Heart left ventricle (tissue), 16 donors: ENCODE measurements at regions of chr7 and their contacts with region 1.

Region 1: GRCh38 chr7:133587903-133588302 is 335.0 kb downstream of the EXOC4 start:
- DNase-seq: no peak
- ATAC-seq: no peak
- H3K4me3 ChIP-seq: no peak overlapping the region
- H3K27ac ChIP-seq: no peak overlapping the region
- H3K4me1 ChIP-seq: peaks cover 0 to 23% (median 1%) of the 10 kb centered on the region in 12 donors
- H3K27me3 ChIP-seq: no peaks in the 10 kb centered on the region
- CTCF ChIP-seq: no peak
- POLR2A ChIP-seq: no peak

Region 2: GRCh38 chr7:133609806-133610205 is 21.9 kb after region 1 on chr7:
- intact Hi-C with region 1: loop called in 1 of 10 experiments (anchors 2 kb)
- DNase-seq: no peak
- ATAC-seq: no peak
- H3K4me3 ChIP-seq: no peak overlapping the region
- H3K27ac ChIP-seq: no peak overlapping the region
- H3K4me1 ChIP-seq: no peaks in the 10 kb centered on the region
- H3K27me3 ChIP-seq: no peaks in the 10 kb centered on the region
- CTCF ChIP-seq: no peak
- POLR2A ChIP-seq: no peak